Heart right ventricle (tissue), 16 donors: ENCODE measurements at regions of chr21 and their contacts with region 1.

Region 1: DNA sequence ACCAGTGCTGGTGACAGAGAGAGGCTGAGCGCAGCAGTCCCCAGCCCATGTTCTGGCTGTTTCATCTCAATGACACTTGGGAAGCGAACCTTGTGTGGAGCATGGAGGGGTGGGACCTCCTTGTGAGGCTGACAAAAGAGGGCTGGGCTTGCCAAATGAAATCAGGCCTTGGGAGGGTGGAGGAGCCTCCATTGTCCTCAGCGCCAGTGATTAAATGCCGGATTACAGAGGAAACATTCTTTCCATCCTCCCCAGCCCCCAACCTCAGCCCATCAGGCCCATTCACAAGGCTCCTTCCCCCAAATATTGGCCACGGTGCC is 63.3 kb upstream of the PAXBP1 start:
- DNase-seq: no peak
- ATAC-seq: no peak
- H3K4me3 ChIP-seq: no peak overlapping the region
- H3K27ac ChIP-seq: no peak overlapping the region
- H3K4me1 ChIP-seq: peaks cover 0 to 5% (median 0%) of the 10 kb centered on the region in 9 donors
- H3K27me3 ChIP-seq: peaks cover 0 to 6% (median 0%) of the 10 kb centered on the region in 7 donors
- CTCF ChIP-seq: no peak

Region 2: DNA sequence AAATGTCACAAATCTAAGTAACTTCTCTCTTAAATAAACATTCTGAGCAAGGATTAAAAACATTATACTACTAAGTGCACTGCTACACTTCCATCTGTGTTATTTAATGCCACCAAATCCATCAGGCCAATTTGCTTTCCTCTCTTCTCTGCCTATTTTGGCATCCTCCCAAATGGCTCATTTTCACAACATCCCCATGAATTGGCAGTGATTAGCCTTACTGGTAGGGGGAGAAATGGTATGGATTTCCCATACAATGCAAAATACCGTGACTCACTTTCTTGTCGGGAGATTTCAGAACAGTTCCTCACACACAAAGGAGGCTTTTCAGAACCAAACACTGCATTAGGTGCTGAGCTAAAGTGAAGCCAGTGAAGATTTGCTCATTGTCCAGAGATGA is 751.7 kb before region 1 on chr21:
- intact Hi-C with region 1: no loop called
- DNase-seq: no peak
- ATAC-seq: no peak
- H3K4me3 ChIP-seq: no peak overlapping the region
- H3K27ac ChIP-seq: no peak overlapping the region
- H3K4me1 ChIP-seq: no peaks in the 10 kb centered on the region
- H3K27me3 ChIP-seq: no peaks in the 10 kb centered on the region
- CTCF ChIP-seq: no peak

Region 3: GRCh38 chr21:33185852-33186251 is 351.0 kb after region 1 on chr21:
- intact Hi-C with region 1: loop called in 3 of 10 experiments (anchors 5 to 10 kb)
- DNase-seq: no peak
- ATAC-seq: peak in 1 of 8 donors; percentile 22
- H3K4me3 ChIP-seq: no peak overlapping the region
- H3K27ac ChIP-seq: peak overlapping the region in 1 of 10 donors; percentile 66
- H3K4me1 ChIP-seq: peaks cover 0 to 24% (median 6%) of the 10 kb centered on the region in 9 donors
- H3K27me3 ChIP-seq: peaks cover 0 to 23% (median 0%) of the 10 kb centered on the region in 7 donors
- CTCF ChIP-seq: no peak

Region 4: GRCh38 chr21:33449616-33450015 is 614.7 kb after region 1 on chr21:
- intact Hi-C with region 1: loop called in 5 of 10 experiments (anchors 5 to 10 kb)
- DNase-seq: no peak
- ATAC-seq: no peak
- H3K4me3 ChIP-seq: no peak overlapping the region
- H3K27ac ChIP-seq: no peak overlapping the region
- H3K4me1 ChIP-seq: peaks cover 0 to 12% (median 5%) of the 10 kb centered on the region in 9 donors
- H3K27me3 ChIP-seq: no peaks in the 10 kb centered on the region
- CTCF ChIP-seq: no peak

Region 5: DNA sequence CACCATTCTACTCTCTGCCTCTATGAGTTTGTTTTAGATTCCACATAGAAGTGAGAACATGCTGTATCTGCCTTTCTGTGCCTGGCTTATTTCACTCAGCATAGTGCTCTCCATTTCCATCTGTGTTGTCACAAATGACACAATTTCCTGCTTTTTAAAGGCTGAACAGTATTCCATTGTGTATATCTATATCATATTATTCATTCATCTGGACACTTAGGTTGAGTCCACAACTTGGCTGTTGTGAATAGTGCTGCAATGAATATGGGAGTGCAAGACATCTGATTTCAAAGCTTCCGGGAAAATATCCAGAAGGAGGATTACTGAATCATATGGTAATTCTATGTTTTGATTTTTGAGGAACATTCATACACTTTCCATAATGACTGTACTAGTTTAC is 773.7 kb after region 1 on chr21:
- intact Hi-C with region 1: loop called in 1 of 10 experiments (anchors 5 kb)
- DNase-seq: no peak
- ATAC-seq: no peak
- H3K4me3 ChIP-seq: no peak overlapping the region
- H3K27ac ChIP-seq: no peak overlapping the region
- H3K4me1 ChIP-seq: no peaks in the 10 kb centered on the region
- H3K27me3 ChIP-seq: no peaks in the 10 kb centered on the region
- CTCF ChIP-seq: no peak